ENCODE measurements at regions of chr18 and their contacts with region 1.

Region 1: GRCh38 chr18:28204154-28204553 is 27.2 kb upstream of the CDH2 start:
- DNase-seq: no peak
- ATAC-seq: no peak
- H3K4me3 ChIP-seq: no peak overlapping the region
- H3K4me3 Mint-ChIP-seq: no peak overlapping the region
- H3K27ac ChIP-seq: no peak overlapping the region
- H3K27ac Mint-ChIP-seq: no peak overlapping the region
- H3K4me1 ChIP-seq: no peaks in the 10 kb centered on the region
- H3K4me1 Mint-ChIP-seq: no peaks in the 10 kb centered on the region
- H3K27me3 ChIP-seq: no peaks in the 10 kb centered on the region
- H3K27me3 Mint-ChIP-seq: no peaks in the 10 kb centered on the region

Region 2: GRCh38 chr18:28161608-28162599 is 42.2 kb before region 1 on chr18:
- CTCF ChIA-PET with region 1: no interaction called
- POLR2A ChIA-PET with region 1: no interaction called
- DNase-seq: no peak
- ATAC-seq: no peak
- H3K4me3 ChIP-seq: no peak overlapping the region
- H3K4me3 Mint-ChIP-seq: no peak overlapping the region
- H3K27ac ChIP-seq: no peak overlapping the region
- H3K27ac Mint-ChIP-seq: no peak overlapping the region
- H3K4me1 ChIP-seq: no peaks in the 10 kb centered on the region
- H3K4me1 Mint-ChIP-seq: no peaks in the 10 kb centered on the region
- H3K27me3 ChIP-seq: no peaks in the 10 kb centered on the region
- H3K27me3 Mint-ChIP-seq: no peaks in the 10 kb centered on the region

Region 3: GRCh38 chr18:28193177-28193778 is 10.9 kb before region 1 on chr18:
- CTCF ChIA-PET with region 1: no interaction called
- POLR2A ChIA-PET with region 1: interaction called in 1 of 2 experiments, 10 read pairs
- DNase-seq: no peak
- ATAC-seq: no peak
- H3K4me3 ChIP-seq: no peak overlapping the region
- H3K4me3 Mint-ChIP-seq: no peak overlapping the region
- H3K27ac ChIP-seq: no peak overlapping the region
- H3K27ac Mint-ChIP-seq: no peak overlapping the region
- H3K4me1 ChIP-seq: no peaks in the 10 kb centered on the region
- H3K4me1 Mint-ChIP-seq: no peaks in the 10 kb centered on the region
- H3K27me3 ChIP-seq: no peaks in the 10 kb centered on the region
- H3K27me3 Mint-ChIP-seq: no peaks in the 10 kb centered on the region